ENCODE measurements at regions of chr12 and their contacts with region 1.

Region 1: GRCh38 chr12:132153501-132154340 is 9.5 kb downstream of the NOC4L start:
- DNase-seq: no peak

Region 2: DNA sequence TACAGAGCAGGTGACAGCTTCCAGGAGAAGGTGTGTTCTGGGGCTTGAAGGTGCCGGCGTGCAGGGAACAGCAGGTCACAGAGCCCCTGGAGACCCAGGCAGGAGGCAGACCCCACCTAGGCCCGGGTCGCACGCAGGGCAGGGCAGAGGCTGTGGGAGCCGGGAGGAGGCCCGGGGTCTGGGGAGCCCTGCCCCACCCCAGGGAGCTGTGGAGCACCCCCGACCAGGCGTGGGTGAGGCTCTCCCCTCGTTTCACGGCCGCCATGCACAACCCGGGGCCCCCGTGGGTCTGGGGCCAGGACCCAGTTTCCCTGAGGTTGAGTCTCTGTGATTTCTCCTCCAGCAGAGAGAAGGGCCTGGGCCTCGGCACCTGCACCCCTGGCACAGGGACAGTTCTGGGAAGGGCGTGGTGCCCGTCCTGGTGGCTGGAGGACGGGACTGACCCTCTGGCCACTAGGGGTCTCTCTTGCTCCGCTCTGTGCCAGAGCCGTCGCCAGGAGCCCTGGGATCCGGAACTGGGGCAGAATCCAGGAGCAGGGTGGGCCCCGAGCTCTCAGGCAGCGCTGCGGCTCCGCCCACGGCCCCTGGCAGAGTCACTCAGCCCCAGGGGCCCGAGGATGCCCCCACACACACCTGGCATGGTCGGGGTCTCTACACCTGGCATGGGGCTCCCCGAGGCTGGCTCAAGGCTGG is 261.1 kb after region 1 on chr12:
- intact Hi-C with region 1: loop called (anchors 10 kb)
- DNase-seq: peak; percentile 89

Region 3: DNA sequence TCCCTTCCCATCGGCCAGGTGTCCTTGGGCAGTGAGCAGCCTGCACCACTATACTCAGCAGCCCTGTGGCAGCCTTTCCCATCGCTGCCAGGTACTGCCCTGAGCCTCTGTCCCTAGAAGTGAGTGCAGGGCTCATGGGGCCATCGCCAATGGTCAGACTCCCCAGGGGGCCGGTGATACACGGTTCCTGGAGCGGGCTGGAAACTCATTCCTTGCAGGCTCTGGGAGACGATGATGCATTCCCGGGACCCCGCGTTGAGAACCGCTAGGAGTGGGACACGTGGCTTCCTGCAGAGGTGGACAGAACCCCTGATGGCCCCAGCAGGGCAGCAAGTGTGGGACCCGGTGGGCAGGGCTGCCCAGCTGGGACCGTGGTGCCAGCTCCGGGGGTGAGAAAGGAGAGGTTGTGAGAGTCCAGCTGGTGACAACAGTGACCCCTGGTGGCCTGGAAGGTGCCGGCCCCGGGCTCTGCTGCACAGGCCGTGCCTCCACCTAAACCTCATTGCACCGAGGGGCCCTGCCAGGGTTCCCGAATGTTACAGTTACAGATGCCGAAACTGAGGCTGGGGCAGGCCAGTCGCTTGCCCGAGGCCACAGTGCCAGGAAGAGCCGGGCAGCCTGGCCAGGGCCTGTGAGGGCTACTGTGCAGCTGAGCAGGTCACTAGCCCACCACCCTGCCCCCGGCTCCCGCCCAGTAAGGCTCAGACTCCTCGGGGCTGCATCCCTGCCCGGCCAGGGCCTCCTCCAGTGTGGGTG is 370.0 kb after region 1 on chr12:
- intact Hi-C with region 1: loop called (anchors 10 kb)
- DNase-seq: peak; percentile 87

Region 4: GRCh38 chr12:132614861-132615578 is 461.3 kb after region 1 on chr12:
- intact Hi-C with region 1: loop called (anchors 10 kb)
- DNase-seq: peak; percentile 83

Measured in cardiac septum (tissue), 1 donor.